ENCODE measurements at regions of chr10 and their contacts with region 1.

Region 1: DNA sequence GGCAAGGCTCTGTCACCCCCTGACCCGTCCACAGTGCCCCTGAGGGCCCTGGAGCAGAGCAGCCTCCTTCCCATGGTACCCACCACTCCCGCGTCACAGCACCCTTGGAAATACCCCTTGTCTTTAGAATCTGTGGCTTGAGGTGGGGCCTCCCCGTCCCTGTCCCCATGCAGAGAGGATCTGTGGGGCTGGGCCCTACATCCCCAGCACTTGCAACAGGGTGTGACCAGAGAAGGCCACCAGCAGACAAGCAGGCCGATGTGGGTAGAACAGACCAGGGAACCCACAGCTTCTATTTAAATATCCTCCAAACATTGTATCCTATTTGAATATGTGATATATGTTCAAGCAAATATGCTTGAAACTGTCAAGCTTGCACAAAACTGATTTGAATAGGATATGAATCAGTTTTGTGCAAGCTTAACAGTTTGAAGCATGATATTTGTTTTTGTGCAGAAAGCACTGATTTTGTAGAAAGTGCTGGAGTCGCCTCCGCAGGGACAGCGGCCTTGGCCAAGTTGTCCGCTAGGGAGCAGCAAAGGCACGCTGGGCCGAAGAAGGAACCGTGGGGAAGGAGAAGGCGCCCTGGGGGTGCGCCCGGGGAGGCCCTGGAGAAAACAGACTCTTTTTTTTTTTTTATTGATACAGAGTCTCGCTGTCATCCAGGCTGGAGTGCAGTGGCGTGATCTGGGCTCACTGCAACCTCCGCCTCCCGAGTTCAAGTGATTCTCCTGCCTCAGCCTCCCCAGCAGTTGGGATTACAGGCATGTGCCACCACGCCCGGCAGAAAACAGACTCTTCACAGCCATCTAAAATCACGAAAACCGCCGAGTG is 2.2 kb downstream of the CFAP46 start:
- DNase-seq: peak in 1 of 2 experiments; percentile 84
- H3K4me3 ChIP-seq: no peak overlapping the region
- H3K27ac ChIP-seq: no peak overlapping the region
- H3K4me1 ChIP-seq: peaks cover 0 to 7% (median 1%) of the 10 kb centered on the region in 4 experiments; a peak in 3 of 7 replicates
- H3K27me3 ChIP-seq: peaks cover 0 to 5% (median 0%) of the 10 kb centered on the region in 4 experiments; a peak in 2 of 7 replicates
- CTCF ChIP-seq: peak; percentile 80 to 95 (median 91)
- EP300 ChIP-seq: no peak
- POLR2A ChIP-seq: no peak
- RAD21 ChIP-seq: peak; percentile 89 to 94

Region 2: DNA sequence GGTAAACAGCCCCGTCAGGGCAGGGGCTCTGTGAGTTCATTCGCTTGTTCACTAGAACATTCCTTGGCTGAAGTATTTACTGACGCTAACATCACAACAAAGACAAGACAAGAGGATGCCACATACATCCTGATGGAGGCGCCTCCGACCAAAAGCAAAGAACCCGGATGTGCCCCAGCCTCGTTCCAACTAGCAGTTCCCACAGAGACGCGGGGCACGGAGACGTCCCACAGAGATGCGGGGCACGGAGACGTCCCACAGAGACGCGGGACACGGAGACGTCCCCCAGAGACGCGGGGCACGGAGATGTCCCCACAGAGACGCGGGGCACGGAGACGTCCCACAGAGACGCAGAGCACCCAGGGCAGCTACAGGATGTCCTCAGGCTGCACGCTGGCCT is 37.6 kb after region 1 on chr10:
- CTCF ChIA-PET with region 1: no interaction called
- POLR2A ChIA-PET with region 1: no interaction called
- DNase-seq: no peak
- H3K4me3 ChIP-seq: no peak overlapping the region
- H3K27ac ChIP-seq: no peak overlapping the region
- H3K4me1 ChIP-seq: peaks cover 0 to under 1% (median 0%) of the 10 kb centered on the region in 4 experiments; a peak in 2 of 7 replicates
- H3K27me3 ChIP-seq: no peaks in the 10 kb centered on the region
- CTCF ChIP-seq: peak in 1 of 3 experiments; percentile 11; a peak in 1 of 4 replicates
- EP300 ChIP-seq: no peak
- POLR2A ChIP-seq: no peak
- RAD21 ChIP-seq: peak; percentile 31 to 47

Region 3: GRCh38 chr10:133124357-133125211 is 184.4 kb after region 1 on chr10:
- CTCF ChIA-PET with region 1: interaction called, 29 read pairs
- POLR2A ChIA-PET with region 1: no interaction called
- DNase-seq: peak in 1 of 2 experiments; percentile 88
- H3K4me3 ChIP-seq: peak overlapping the region in 1 of 4 experiments; percentile 32; a peak in 2 of 8 replicates
- H3K27ac ChIP-seq: no peak overlapping the region
- H3K4me1 ChIP-seq: peaks cover 0 to 3% (median 0%) of the 10 kb centered on the region in 4 experiments; a peak in 1 of 7 replicates
- H3K27me3 ChIP-seq: no peaks in the 10 kb centered on the region; a peak in 1 of 7 replicates
- CTCF ChIP-seq: peak in 2 of 3 experiments; percentile 52 to 81; a peak in 3 of 4 replicates
- EP300 ChIP-seq: no peak
- POLR2A ChIP-seq: no peak
- RAD21 ChIP-seq: peak; percentile 76 to 82